Right ventricle myocardium inferior (tissue), 1 donor: ENCODE measurements at regions of chr5 and their contacts with region 1.

Region 1: DNA sequence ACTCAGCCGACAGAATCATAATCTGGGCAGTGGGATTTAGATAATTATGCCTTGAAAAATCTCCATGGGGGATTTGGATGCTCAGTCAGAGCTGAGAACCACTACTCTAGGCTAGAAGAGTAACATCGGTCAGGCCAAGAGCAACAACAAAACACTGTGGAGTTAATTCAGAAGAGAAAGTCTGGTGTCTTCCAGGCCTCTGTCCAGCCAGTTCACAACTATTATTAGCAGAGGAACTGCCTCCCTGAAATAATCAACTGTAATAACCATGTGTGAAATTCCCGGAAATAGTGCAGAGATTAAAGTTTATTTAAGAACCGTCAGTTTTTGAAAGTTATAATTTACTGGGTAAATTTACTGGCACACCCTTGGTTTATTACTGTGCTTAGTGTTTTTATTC is 8.2 kb upstream of the MARCHF3 start:
- DNase-seq: no peak
- ATAC-seq: peak; percentile 62

Region 2: GRCh38 chr5:127072861-127073846 is 34.6 kb after region 1 on chr5 and contains the start of gene C5orf63:
- intact Hi-C with region 1: loop called (anchors 5 kb)
- DNase-seq: peak; percentile 80
- ATAC-seq: peak; percentile 91
- total RNA-seq, gene C5orf63: 11.4 TPM